ENCODE measurements at regions of chr16 and their contacts with region 1.

Region 1: GRCh38 chr16:76287466-76287865 is 10.3 kb downstream of the CNTNAP4 start:
- DNase-seq: no peak
- ATAC-seq: no peak
- H3K4me3 ChIP-seq: no peak overlapping the region
- H3K27ac ChIP-seq: no peak overlapping the region
- H3K4me1 ChIP-seq: no peaks in the 10 kb centered on the region
- H3K27me3 ChIP-seq: no peaks in the 10 kb centered on the region
- CTCF ChIP-seq: no peak
- POLR2A ChIP-seq: no peak

Region 2: GRCh38 chr16:76639685-76640289 is 352.3 kb after region 1 on chr16:
- intact Hi-C with region 1: loop called in 1 of 2 experiments (anchors 10 kb)
- DNase-seq: peak in 2 of 3 donors; percentile 37 to 62
- ATAC-seq: peak; percentile 98 to 100 (median 100)
- H3K4me3 ChIP-seq: no peak overlapping the region
- H3K27ac ChIP-seq: no peak overlapping the region
- H3K4me1 ChIP-seq: no peaks in the 10 kb centered on the region
- H3K27me3 ChIP-seq: no peaks in the 10 kb centered on the region
- CTCF ChIP-seq: peak; percentile 46 to 60 (median 53)
- POLR2A ChIP-seq: no peak

Measured in right lobe of liver (tissue), 6 donors.